Activated CD8-positive, alpha-beta T cell treated with anti-CD3 and anti-CD28 coated beads for 36 hours (primary cell): ENCODE measurements at regions of chr19 and their contacts with region 1.

Region 1: DNA sequence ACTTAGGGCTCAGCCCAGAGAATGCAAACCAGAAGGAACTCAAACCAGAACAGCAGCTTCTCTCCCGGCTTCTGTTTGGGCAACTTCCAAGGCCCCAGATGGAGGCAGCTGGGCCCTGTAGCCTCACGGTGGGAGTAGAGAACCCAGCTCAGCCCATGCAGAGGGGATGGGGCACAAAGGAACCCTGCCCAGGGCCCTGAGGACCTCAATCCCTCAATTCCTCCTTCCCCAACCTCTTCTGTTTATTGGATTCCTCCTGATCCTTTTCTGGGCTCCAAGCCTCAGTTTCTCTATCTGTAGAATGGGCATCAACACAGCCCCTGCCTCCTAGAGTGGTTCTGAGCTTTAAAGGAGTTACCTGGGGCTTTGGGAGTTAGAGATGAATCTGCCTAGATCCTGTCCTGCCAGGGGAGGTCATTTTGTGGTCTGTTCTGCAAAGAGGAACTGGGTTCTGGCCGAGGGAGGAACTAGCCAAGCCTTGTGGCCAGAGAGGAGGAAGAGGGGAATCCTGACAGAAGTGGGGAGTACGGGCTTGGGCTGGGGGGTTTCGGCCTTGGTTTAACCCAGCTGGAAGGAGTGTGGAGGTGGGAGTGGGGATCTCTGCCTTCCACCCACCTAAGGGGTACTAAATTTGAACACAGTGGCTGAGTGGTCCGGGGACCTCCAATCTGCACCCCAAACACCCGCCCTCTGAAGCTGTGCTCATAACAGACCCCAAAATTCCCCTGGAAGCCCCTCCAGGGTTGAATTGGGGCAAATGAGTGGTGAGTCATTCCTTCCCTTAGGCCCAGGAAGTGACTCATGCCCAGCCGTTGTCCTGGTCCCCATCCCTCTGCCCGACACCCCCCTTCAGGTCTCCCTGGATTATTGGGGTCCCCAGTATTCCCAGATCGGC is 2.7 kb downstream of the ADGRE5 start:
- DNase-seq: peak; percentile 84
- ATAC-seq: peak; percentile 23
- H3K4me3 Mint-ChIP-seq: peak overlapping the region; percentile 99
- H3K27ac Mint-ChIP-seq: peak overlapping the region; percentile 100
- H3K4me1 Mint-ChIP-seq: peaks cover 31% of the 10 kb centered on the region
- H3K27me3 Mint-ChIP-seq: no peaks in the 10 kb centered on the region
- CTCF ChIP-seq: no peak

Region 2: GRCh38 chr19:14081325-14082093 is 302.4 kb before region 1 on chr19:
- CTCF ChIA-PET with region 1: no interaction called
- POLR2A ChIA-PET with region 1: no interaction called
- intact Hi-C with region 1: no loop called
- DNase-seq: peak; percentile 99
- ATAC-seq: peak; percentile 94
- H3K4me3 Mint-ChIP-seq: peak overlapping the region; percentile 96
- H3K27ac Mint-ChIP-seq: peak overlapping the region; percentile 93
- H3K4me1 Mint-ChIP-seq: peaks cover 12% of the 10 kb centered on the region
- H3K27me3 Mint-ChIP-seq: no peaks in the 10 kb centered on the region
- CTCF ChIP-seq: no peak

Region 3: GRCh38 chr19:14310055-14310454 is 73.9 kb before region 1 on chr19:
- CTCF ChIA-PET with region 1: no interaction called
- POLR2A ChIA-PET with region 1: no interaction called
- intact Hi-C with region 1: no loop called
- DNase-seq: no peak
- ATAC-seq: no peak
- H3K4me3 Mint-ChIP-seq: no peak overlapping the region
- H3K27ac Mint-ChIP-seq: no peak overlapping the region
- H3K4me1 Mint-ChIP-seq: peaks cover 9% of the 10 kb centered on the region
- H3K27me3 Mint-ChIP-seq: no peaks in the 10 kb centered on the region
- CTCF ChIP-seq: no peak

Region 4: DNA sequence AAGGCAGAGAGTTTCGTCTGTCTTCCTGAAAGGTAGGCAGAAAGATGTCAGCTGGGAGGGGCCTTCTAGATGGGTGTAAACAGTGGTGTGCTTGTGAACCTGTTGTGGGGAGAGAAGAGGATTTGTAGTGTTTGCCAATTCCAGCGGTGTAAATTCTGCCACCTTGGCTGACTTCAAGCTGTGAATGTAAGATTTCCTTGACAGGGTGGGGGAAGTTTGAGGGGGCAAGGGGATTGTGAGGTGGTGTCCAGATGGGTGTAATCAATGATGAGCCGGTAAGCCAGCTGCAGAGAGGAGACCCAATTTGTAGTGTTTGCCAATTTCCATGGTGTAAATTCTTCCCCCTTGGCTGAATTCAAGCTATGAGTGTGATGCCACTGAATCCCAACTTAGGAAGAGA is 63.7 kb before region 1 on chr19:
- CTCF ChIA-PET with region 1: no interaction called
- POLR2A ChIA-PET with region 1: no interaction called
- intact Hi-C with region 1: no loop called
- DNase-seq: no peak
- ATAC-seq: no peak
- H3K4me3 Mint-ChIP-seq: no peak overlapping the region
- H3K27ac Mint-ChIP-seq: no peak overlapping the region
- H3K4me1 Mint-ChIP-seq: no peaks in the 10 kb centered on the region
- H3K27me3 Mint-ChIP-seq: no peaks in the 10 kb centered on the region
- CTCF ChIP-seq: no peak

Region 5: DNA sequence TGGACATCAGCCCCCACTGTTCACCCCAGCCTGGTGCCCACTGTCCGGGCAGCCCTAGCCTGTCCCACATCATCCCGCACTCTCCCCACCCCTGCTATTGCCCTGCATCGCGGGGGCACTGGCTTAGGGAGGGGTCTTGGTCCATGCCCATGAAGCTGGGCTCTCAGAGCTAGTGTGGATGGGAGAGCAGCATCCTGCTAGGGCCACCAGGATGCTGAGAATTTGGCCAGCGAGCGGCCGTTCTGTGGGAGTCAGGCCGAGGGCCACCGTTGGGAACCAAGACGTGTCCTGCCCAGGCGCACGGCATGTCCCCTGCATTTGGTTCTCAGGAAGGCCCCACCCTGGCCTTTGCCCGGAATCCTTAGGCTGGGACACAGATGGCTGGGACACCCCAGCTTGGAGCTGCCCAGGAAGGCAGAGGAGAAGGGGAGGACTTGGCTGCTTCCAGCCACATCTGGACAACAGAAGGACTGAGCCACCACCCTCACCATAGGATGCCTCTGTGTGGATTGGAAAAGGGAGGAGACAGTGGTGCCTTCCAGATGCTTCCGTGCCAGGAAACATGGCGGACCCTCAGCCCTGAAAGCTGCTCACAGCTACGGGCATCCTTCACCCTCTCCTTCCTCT is 11.9 kb after region 1 on chr19:
- CTCF ChIA-PET with region 1: no interaction called
- POLR2A ChIA-PET with region 1: interaction called, 59 read pairs
- intact Hi-C with region 1: no loop called
- DNase-seq: no peak
- ATAC-seq: peak; percentile 17
- H3K4me3 Mint-ChIP-seq: no peak overlapping the region
- H3K27ac Mint-ChIP-seq: peak overlapping the region; percentile 52
- H3K4me1 Mint-ChIP-seq: peaks cover 13% of the 10 kb centered on the region
- H3K27me3 Mint-ChIP-seq: no peaks in the 10 kb centered on the region
- CTCF ChIP-seq: no peak

Region 6: GRCh38 chr19:14405758-14406644 is 22.1 kb after region 1 on chr19:
- CTCF ChIA-PET with region 1: interaction called, 19 read pairs
- POLR2A ChIA-PET with region 1: interaction called, 41 read pairs
- intact Hi-C with region 1: no loop called
- DNase-seq: peak; percentile 93
- ATAC-seq: peak; percentile 84
- H3K4me3 Mint-ChIP-seq: peak overlapping the region; percentile 26
- H3K27ac Mint-ChIP-seq: peak overlapping the region; percentile 66
- H3K4me1 Mint-ChIP-seq: peaks cover 21% of the 10 kb centered on the region
- H3K27me3 Mint-ChIP-seq: no peaks in the 10 kb centered on the region
- CTCF ChIP-seq: peak; percentile 90

Region 7: GRCh38 chr19:14413693-14414181 is 29.8 kb after region 1 on chr19:
- CTCF ChIA-PET with region 1: no interaction called
- POLR2A ChIA-PET with region 1: interaction called, 58 read pairs
- intact Hi-C with region 1: no loop called
- DNase-seq: no peak
- ATAC-seq: no peak
- H3K4me3 Mint-ChIP-seq: no peak overlapping the region
- H3K27ac Mint-ChIP-seq: peak overlapping the region; percentile 78
- H3K4me1 Mint-ChIP-seq: peaks cover 51% of the 10 kb centered on the region
- H3K27me3 Mint-ChIP-seq: no peaks in the 10 kb centered on the region
- CTCF ChIP-seq: no peak

Region 8: DNA sequence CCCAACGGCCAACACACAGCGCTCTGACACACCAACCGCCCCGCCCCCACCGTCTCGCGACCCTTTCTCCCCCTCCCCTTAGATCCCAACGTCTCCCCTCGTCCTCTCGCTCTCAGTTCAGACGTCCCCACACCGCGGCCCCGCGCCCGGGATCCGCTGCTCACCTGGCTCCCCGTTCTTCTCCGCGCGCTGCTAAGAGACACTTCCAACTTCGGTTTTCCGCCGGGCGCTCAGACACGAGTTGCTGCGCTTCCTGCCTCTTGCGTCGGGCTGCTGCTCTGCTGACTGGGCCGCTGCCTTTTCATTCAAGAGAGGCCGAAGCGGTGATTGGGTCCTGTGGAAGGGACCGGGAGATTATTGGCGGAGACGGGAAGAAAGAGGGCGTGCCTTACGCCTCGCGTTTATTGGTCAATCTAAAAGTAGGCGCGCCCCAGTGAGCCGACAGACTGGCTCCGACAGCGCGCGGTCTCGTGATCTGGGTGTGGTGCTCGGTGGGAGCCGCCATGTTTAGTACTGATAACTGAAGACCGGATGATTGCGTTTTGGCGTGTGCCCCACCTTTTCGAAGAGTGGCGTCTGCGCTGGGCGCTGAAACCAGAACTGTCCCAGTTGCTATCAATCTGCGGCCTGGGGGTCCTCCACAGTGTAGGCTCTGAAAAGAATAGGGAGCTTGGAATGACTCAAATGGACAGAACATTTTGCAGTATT is 35.4 kb after region 1 on chr19 and contains the start of gene DDX39A:
- CTCF ChIA-PET with region 1: no interaction called
- POLR2A ChIA-PET with region 1: interaction called, 58 read pairs
- intact Hi-C with region 1: no loop called
- DNase-seq: peak; percentile 99
- ATAC-seq: peak; percentile 93
- H3K4me3 Mint-ChIP-seq: peak within 1 kb of the TSS; percentile 93
- H3K27ac Mint-ChIP-seq: peak within 1 kb of the TSS; percentile 98
- H3K4me1 Mint-ChIP-seq: peaks cover 27% of the 10 kb centered on the region
- H3K27me3 Mint-ChIP-seq: no peaks in the 10 kb centered on the region
- CTCF ChIP-seq: no peak
- total RNA-seq, gene DDX39A: 217 to 226 TPM